ENCODE measurements at regions of chr2 and their contacts with region 1.

Region 1: DNA sequence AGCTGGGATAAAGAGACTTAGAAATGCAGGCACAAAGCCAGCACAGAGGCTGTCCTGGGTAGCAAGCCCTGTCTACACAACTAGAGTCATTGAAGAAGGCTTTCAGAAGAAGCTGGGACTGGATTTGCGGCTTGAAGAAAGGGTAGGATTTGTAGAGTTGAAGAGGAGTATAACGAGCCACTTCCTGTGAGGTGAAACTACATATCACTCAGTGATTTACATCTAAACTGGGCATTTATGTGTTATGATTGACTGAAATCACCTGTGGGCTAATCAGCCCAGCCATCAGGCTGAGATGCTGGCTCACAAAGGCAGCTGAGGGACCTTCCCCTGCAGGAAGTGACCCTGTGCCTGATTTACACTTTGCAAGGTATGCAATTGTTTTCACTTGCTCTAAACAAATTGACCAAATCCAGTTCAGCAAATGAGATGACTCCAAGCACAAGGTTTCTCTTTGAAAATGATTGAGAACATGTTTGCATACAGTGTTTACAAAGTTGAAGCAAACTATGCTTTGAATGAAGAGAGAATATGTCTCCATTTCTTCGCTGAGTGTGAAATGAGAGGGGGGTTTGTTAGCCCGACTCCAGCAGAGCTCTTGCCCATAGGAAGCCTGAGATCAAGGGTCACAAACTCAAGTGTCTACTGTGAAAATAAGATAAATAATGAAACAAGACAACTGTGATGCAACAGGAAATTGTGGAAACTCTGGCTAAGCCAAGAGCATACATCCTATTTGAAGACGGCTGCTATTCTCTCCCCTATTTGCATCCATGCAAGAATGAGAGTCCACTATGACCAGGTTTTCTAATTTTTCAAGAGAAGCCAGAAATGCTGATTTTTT is 69.3 kb upstream of the HK2 start:
- DNase-seq: peak; percentile 51 to 79
- H3K4me3 ChIP-seq: no peak overlapping the region
- H3K4me3 Mint-ChIP-seq: no peak overlapping the region
- H3K27ac Mint-ChIP-seq: no peak overlapping the region
- H3K4me1 ChIP-seq: peaks cover 30% of the 10 kb centered on the region
- H3K4me1 Mint-ChIP-seq: peaks cover 41% of the 10 kb centered on the region
- H3K27me3 ChIP-seq: no peaks in the 10 kb centered on the region
- H3K27me3 Mint-ChIP-seq: no peaks in the 10 kb centered on the region
- CTCF ChIP-seq: no peak

Region 2: GRCh38 chr2:74715078-74715791 is 49.4 kb before region 1 on chr2:
- CTCF ChIA-PET with region 1: interaction called, 6 read pairs
- POLR2A ChIA-PET with region 1: no interaction called
- intact Hi-C with region 1: loop called (anchors 1 kb)
- DNase-seq: peak; percentile 80 to 90
- H3K4me3 ChIP-seq: peak overlapping the region; percentile 62
- H3K4me3 Mint-ChIP-seq: peak overlapping the region; percentile 86
- H3K27ac Mint-ChIP-seq: no peak overlapping the region
- H3K4me1 ChIP-seq: no peaks in the 10 kb centered on the region
- H3K4me1 Mint-ChIP-seq: no peaks in the 10 kb centered on the region
- H3K27me3 ChIP-seq: no peaks in the 10 kb centered on the region; the same call in 1 of the 2 replicates
- H3K27me3 Mint-ChIP-seq: peaks cover 5% of the 10 kb centered on the region
- CTCF ChIP-seq: peak; percentile 88 to 95

Region 3: GRCh38 chr2:74991977-74992376 is 227.3 kb after region 1 on chr2:
- CTCF ChIA-PET with region 1: no interaction called
- POLR2A ChIA-PET with region 1: no interaction called
- intact Hi-C with region 1: no loop called
- DNase-seq: no peak
- H3K4me3 ChIP-seq: no peak overlapping the region
- H3K4me3 Mint-ChIP-seq: no peak overlapping the region
- H3K27ac Mint-ChIP-seq: no peak overlapping the region
- H3K4me1 ChIP-seq: peaks cover 13% of the 10 kb centered on the region
- H3K4me1 Mint-ChIP-seq: peaks cover 11% of the 10 kb centered on the region
- H3K27me3 ChIP-seq: no peaks in the 10 kb centered on the region
- H3K27me3 Mint-ChIP-seq: no peaks in the 10 kb centered on the region
- CTCF ChIP-seq: no peak